ENCODE measurements at regions of chrX and their contacts with region 1.

Region 1: GRCh38 chrX:10189317-10190268 is 32.8 kb downstream of the CLCN4 start:
- DNase-seq: peak; percentile 50 to 84 (median 77)
- H3K4me3 ChIP-seq: no peak overlapping the region
- H3K27ac ChIP-seq: no peak overlapping the region
- H3K4me1 ChIP-seq: no peaks in the 10 kb centered on the region
- H3K27me3 ChIP-seq: peaks cover 0 to 16% (median 0%) of the 10 kb centered on the region in 5 experiments

Region 2: DNA sequence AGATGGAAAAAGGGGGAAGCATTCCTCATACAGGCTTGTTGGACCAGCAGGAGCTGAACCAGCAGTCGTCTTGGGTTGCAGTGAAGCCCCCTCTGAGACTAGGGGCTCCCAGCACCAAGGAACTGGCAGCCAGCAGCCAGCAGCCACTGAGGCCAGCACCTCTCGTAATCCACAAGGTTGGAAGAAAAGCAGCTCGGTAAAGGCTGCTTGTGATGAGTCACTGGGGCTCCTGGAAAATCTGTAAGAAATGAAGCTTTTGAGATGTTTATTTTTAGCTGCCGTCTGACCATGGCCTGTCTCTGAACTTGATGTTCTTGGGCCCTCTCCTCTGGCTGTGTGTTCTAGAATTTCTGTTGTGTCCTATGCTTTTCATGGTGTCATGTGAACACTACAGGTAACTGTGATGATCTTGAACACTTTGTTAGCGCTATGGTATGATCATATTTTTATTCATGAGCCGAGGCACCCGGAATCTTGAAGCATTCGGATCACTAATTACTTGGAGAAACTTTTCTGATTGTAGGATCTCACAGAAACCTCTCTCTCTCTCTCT is 14.2 kb before region 1 on chrX:
- CTCF ChIA-PET with region 1: interaction called, 11 read pairs
- POLR2A ChIA-PET with region 1: no interaction called
- DNase-seq: no peak
- H3K4me3 ChIP-seq: no peak overlapping the region
- H3K27ac ChIP-seq: no peak overlapping the region
- H3K4me1 ChIP-seq: peaks cover 0 to 11% (median 4%) of the 10 kb centered on the region in 4 experiments
- H3K27me3 ChIP-seq: peaks cover 0 to 11% (median 0%) of the 10 kb centered on the region in 5 experiments

Region 3: GRCh38 chrX:10597871-10598270 is 408.3 kb after region 1 on chrX:
- CTCF ChIA-PET with region 1: interaction called, 24 read pairs
- POLR2A ChIA-PET with region 1: no interaction called
- DNase-seq: peak in 2 of 3 donors; percentile 54 to 57
- H3K4me3 ChIP-seq: no peak overlapping the region
- H3K27ac ChIP-seq: no peak overlapping the region
- H3K4me1 ChIP-seq: no peaks in the 10 kb centered on the region
- H3K27me3 ChIP-seq: peaks cover 0 to 3% (median 0%) of the 10 kb centered on the region in 5 experiments

Region 4: GRCh38 chrX:10620121-10620699 is 430.6 kb after region 1 on chrX and contains the start of gene MID1:
- CTCF ChIA-PET with region 1: interaction called, 14 read pairs
- POLR2A ChIA-PET with region 1: no interaction called
- DNase-seq: peak in 2 of 3 donors; percentile 12 to 28
- H3K4me3 ChIP-seq: peak within 1 kb of the TSS; percentile 26 to 76 (median 59)
- H3K27ac ChIP-seq: no peak within 1 kb of the TSS
- H3K4me1 ChIP-seq: peaks cover 2 to 17% (median 9%) of the 10 kb centered on the region in 4 experiments
- H3K27me3 ChIP-seq: peaks cover 0 to 66% (median 28%) of the 10 kb centered on the region in 5 experiments

Region 5: GRCh38 chrX:10722851-10723250 is 533.3 kb after region 1 on chrX:
- CTCF ChIA-PET with region 1: interaction called, 47 read pairs
- POLR2A ChIA-PET with region 1: no interaction called
- DNase-seq: peak; percentile 19 to 60 (median 46)
- H3K4me3 ChIP-seq: no peak overlapping the region
- H3K27ac ChIP-seq: no peak overlapping the region
- H3K4me1 ChIP-seq: no peaks in the 10 kb centered on the region
- H3K27me3 ChIP-seq: no peaks in the 10 kb centered on the region

Region 6: GRCh38 chrX:11137543-11138139 is 948.0 kb after region 1 on chrX:
- CTCF ChIA-PET with region 1: interaction called, 15 read pairs
- POLR2A ChIA-PET with region 1: no interaction called
- DNase-seq: peak; percentile 52 to 80 (median 71)
- H3K4me3 ChIP-seq: no peak overlapping the region
- H3K27ac ChIP-seq: no peak overlapping the region
- H3K4me1 ChIP-seq: no peaks in the 10 kb centered on the region
- H3K27me3 ChIP-seq: no peaks in the 10 kb centered on the region